Activated CD4-positive, alpha-beta memory T cell treated with anti-CD3 and anti-CD28 coated beads for 36 hours (primary cell): ENCODE measurements at regions of chr12 and their contacts with region 1.

Region 1: DNA sequence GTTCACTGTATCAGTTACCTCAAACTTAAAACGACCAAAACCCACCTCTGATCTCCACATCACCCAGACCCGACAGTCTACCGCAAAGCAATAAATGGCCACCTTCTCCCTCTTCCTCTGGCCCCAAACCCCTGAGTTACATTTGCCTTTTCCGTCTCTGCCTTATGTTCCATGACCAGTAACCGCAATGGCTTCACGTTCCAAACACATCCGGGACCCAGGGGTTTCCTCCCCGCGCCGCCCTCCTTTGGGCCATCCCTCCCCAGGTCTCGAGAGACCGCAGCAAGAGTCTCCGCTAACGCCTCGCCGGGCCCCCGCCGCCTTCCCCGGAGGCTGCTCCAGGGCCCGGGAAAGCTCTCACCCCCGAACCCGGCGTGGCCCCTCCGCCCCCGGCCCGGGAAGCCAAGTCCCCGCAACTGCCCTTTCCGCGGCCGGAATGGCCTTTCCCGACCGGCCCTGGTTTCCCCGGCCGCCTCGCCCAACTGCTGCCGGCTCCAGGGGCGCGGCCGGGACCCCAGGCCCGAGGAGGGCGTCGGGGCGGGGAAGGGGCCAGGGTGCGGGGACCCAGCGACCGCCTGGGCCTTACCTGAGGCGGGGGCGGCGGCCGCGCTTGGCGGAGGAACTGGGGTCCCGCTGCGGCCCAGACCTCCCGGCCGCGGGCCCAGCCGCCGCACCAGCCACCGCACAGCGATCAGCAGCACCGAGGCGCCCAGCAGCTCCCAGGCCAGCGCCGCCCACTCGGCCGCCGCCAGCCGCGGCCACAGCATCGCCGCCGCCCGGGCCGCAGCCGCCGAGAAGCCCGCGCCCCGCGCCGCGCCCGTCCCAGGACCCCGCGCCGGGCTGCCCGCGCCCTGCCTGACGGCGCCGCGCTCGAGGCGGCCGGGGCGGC is at the start of gene ANKLE2:
- DNase-seq: peak; percentile 86
- H3K4me3 Mint-ChIP-seq: peak within 1 kb of the TSS; percentile 88
- H3K27ac Mint-ChIP-seq: peak within 1 kb of the TSS; percentile 97
- H3K4me1 Mint-ChIP-seq: peaks cover 26% of the 10 kb centered on the region
- H3K27me3 Mint-ChIP-seq: no peaks in the 10 kb centered on the region
- total RNA-seq, gene ANKLE2: 112 to 123 TPM

Region 2: GRCh38 chr12:132687208-132688164 is 73.8 kb before region 1 on chr12 and contains the starts of genes POLE and PXMP2:
- CTCF ChIA-PET with region 1: no interaction called
- POLR2A ChIA-PET with region 1: no interaction called
- intact Hi-C with region 1: loop called (anchors 1 kb)
- DNase-seq: peak; percentile 96
- H3K4me3 Mint-ChIP-seq: peak within 1 kb of the TSS; percentile 77
- H3K27ac Mint-ChIP-seq: peak within 1 kb of the TSS; percentile 38
- H3K4me1 Mint-ChIP-seq: peaks cover 18% of the 10 kb centered on the region
- H3K27me3 Mint-ChIP-seq: no peaks in the 10 kb centered on the region
- total RNA-seq, gene POLE: 112 to 114 TPM
- total RNA-seq, gene PXMP2: 17.8 to 20.9 TPM

Region 3: DNA sequence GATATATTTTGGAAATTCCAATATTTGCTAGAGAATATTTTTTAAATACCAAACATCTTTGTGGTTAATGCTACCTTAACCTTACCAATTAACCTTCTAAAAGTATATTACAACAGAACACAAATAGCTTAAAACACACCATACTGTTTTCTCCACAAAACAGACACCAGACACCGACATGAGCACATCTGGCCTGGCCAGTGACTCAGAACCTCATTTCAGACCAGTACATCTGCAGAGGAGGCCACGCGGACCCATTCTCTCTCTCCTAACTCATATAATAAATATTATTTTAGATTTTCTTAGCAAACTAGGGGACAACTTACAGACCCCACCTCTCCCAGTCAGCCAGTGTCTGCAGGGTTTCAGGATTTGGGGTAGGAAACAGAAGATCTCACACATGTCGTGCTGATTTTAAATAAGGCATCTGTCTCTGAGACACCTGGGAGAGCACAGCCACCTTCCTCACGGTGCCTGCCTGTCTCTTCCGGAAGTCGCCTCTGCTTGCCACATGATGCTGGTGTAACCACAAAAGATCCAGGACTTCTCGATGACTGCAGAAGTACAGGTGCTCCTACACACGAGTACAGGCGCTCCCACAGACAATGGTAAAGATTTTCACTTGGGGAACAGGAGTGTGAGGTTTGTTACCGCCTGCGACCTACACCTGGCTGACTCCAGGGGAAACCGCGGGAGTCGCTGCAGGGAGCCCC is 10.0 kb after region 1 on chr12:
- CTCF ChIA-PET with region 1: no interaction called
- POLR2A ChIA-PET with region 1: no interaction called
- intact Hi-C with region 1: loop called (anchors 1 kb)
- DNase-seq: peak; percentile 61
- H3K4me3 Mint-ChIP-seq: peak overlapping the region; percentile 32
- H3K27ac Mint-ChIP-seq: peak overlapping the region; percentile 67
- H3K4me1 Mint-ChIP-seq: peaks cover 30% of the 10 kb centered on the region
- H3K27me3 Mint-ChIP-seq: no peaks in the 10 kb centered on the region

Region 4: DNA sequence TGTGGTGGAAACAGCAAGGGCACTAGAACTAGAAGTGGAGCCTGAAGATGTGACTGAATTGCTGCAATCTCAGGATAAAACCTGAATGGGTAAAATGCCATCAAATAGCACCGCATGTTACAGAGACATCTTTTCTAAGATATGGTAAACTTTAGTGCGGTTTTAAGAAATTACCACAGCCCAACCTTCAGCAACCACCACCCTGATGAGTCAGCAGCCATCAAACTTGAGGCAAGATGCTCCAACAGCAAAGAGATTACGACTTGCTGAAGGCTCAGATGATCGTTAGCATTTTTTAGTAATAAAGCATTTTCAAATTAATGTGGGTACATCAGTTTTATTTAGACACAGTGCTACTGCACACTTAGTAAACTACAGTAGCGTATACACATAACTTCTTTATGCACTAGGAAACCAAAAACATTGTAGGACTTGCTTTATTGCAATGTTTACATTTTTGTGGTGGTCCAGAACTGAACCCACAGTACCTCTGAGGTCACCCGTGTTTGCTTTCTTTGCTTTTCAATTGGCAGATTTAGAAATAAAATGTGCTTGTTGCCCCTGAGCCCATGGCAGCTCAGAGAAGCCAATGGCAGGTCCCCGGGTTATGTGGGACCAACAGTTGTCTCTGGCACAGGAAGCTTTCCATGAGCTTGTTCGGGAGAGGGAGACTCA is 51.5 kb after region 1 on chr12:
- CTCF ChIA-PET with region 1: no interaction called
- POLR2A ChIA-PET with region 1: no interaction called
- intact Hi-C with region 1: no loop called
- DNase-seq: peak; percentile 49
- H3K4me3 Mint-ChIP-seq: no peak overlapping the region
- H3K27ac Mint-ChIP-seq: no peak overlapping the region
- H3K4me1 Mint-ChIP-seq: peaks cover 13% of the 10 kb centered on the region
- H3K27me3 Mint-ChIP-seq: no peaks in the 10 kb centered on the region

Region 5: DNA sequence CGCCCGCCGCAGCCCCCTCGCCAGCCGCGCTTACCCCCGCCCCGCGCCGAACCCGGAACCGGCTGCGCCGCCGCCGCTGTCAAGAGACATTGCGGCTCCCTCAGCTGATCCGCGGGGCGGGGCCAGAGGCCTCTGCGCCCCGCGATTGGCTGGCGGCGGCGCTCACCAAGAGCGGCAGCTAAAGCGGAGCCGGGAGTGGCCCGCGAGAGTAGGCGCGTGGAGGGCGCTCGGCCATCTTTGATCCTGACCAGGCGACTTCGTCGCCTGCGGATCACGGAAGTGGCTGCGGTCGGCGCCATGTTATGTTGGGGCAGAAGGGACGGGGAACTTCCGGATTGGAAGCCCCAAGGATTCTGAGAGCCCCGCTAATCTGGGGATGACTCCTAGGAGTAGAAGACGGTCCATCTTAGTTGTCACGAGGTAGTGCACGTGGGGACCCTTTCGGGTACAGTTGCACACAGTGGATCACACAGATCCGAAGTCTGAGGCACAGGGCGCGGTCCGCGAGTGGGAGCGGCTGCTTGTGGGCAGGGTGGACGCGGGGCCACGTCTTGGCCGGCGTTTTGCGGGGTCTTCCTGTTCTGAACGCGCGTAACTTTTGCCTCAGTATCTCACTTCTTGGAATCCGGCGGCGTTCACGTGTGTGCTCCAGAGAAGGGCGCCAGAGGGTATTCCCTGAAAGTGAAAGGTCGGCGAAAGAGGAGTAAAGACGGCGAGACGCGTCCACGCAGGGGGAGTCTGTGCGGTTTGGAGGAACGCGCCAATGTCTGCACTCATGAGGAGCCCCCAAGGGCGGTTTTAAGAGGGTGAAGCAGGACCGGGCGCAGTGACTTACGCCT is 126.5 kb after region 1 on chr12 and contains the start of gene CHFR:
- CTCF ChIA-PET with region 1: no interaction called
- POLR2A ChIA-PET with region 1: interaction called, 3 read pairs
- intact Hi-C with region 1: loop called (anchors 2 kb)
- DNase-seq: peak; percentile 98
- H3K4me3 Mint-ChIP-seq: peak within 1 kb of the TSS; percentile 99
- H3K27ac Mint-ChIP-seq: peak within 1 kb of the TSS; percentile 100
- H3K4me1 Mint-ChIP-seq: peaks cover 17% of the 10 kb centered on the region
- H3K27me3 Mint-ChIP-seq: no peaks in the 10 kb centered on the region
- total RNA-seq, gene CHFR: 41.2 to 42.9 TPM

Region 6: GRCh38 chr12:133130038-133130807 is 368.9 kb after region 1 on chr12 and contains the starts of genes ZNF10 and ZNF891:
- CTCF ChIA-PET with region 1: no interaction called
- POLR2A ChIA-PET with region 1: interaction called, 3 read pairs
- intact Hi-C with region 1: loop called (anchors 5 kb)
- DNase-seq: peak; percentile 98
- H3K4me3 Mint-ChIP-seq: peak within 1 kb of the TSS; percentile 97
- H3K27ac Mint-ChIP-seq: peak within 1 kb of the TSS; percentile 96
- H3K4me1 Mint-ChIP-seq: peaks cover 14% of the 10 kb centered on the region
- H3K27me3 Mint-ChIP-seq: no peaks in the 10 kb centered on the region
- total RNA-seq, gene ZNF10: 3.7 to 4.1 TPM
- total RNA-seq, gene ZNF891: 1.1 to 1.2 TPM